Left cardiac atrium (tissue), 4 donors: ENCODE measurements at regions of chr4 and their contacts with region 1.

Region 1: GRCh38 chr4:52911684-52912294 is 49.7 kb downstream of the RASL11B start:
- DNase-seq: peak; percentile 80
- ATAC-seq: peak; percentile 32 to 43

Region 2: DNA sequence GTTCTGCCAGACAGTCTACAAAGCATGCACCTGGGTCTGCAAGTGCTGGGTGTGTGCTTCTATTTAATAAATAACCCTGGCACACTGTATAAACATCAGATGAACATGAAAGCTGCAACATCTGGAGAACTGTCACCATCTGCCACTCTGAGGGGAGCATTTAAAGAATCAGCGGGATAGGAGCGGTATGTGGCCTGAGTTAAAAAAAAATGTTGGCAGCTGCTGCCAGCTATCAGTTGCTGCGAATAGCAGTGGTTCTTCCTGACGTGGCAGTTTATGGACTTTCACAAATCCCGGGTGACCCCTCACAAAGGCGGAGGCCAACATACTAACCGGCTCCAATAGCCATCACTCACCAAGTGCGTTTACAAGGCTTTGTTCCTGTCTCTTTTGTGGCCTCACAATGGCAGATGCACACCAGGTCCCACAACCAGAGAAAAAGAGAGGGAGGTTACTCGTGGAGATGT is 45.5 kb after region 1 on chr4:
- intact Hi-C with region 1: loop called in 1 of 2 experiments (anchors 5 kb)
- DNase-seq: no peak
- ATAC-seq: peak; percentile 66 to 73

Region 3: DNA sequence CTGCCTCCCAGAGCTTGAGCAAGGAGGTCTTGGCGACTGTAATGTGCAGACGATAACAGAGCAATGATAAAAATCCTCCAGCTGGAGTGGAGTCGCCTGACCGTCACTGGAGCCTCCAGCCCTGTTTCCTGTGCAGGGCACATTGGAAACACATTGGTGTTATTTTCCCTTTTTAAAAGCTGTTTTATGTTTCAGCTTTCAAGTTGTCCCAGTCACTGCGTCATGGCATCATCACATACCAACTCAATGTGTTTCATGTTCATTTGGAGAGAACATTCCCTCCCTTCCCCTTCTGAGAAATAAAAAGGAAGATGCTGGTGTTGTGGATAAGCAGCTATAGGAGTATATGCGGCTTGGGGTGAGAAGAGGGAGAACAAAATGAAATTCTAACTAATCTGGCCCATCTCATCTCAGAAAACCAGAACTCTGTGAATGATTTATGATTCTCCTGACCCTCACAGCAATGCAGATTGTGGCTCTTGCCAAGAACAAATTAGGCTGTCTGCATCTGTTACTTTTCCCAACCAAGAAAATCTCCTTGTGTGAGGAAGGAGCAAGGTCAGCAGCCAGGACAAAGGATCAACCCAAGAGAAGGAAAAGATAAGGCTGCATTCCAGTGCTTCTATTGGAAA is 84.6 kb after region 1 on chr4:
- intact Hi-C with region 1: no loop called
- DNase-seq: peak; percentile 53
- ATAC-seq: peak; percentile 71 to 78